Left cardiac atrium (tissue), 4 donors: ENCODE measurements at regions of chr6 and their contacts with region 1.

Region 1: DNA sequence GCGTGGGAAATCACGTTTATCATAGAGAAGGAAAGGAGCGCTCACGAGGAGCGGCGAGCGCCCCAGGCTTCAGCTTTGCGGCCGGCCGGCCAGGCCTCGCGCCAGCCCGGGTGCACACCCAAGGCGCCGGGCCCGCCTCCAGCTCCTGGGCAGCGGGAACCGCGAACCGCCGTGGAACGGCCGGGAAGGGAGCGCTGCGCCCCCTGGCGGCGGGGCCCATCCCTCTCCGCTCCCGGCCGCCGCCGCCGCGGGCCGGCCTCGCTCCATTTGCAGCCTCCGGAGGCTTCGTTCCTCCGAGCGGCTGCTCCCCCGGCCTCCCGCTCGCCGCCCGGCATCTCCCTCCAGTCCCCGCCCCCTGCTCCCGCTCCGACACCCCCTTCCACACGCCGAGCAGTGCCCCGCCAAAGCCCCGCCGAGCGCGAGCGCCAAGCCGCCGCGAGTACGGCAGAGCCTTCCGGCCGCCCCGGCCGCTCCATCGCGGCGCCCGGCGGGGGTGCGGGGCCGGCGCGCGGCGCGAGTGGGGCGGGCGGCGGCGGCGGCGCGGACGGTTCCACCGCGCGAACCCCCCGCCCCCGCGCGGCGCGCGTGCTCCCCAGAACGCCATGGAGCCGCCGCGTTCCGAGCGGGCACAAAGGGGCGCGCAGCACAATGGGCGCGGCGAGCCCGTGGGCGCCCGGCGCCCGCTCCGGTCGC is 956 bp downstream of the BEND3 start:
- DNase-seq: peak; percentile 90
- ATAC-seq: peak; percentile 96

Region 2: GRCh38 chr6:106461084-106461483 is 653.3 kb before region 1 on chr6:
- intact Hi-C with region 1: no loop called
- DNase-seq: no peak
- ATAC-seq: no peak

Region 3: DNA sequence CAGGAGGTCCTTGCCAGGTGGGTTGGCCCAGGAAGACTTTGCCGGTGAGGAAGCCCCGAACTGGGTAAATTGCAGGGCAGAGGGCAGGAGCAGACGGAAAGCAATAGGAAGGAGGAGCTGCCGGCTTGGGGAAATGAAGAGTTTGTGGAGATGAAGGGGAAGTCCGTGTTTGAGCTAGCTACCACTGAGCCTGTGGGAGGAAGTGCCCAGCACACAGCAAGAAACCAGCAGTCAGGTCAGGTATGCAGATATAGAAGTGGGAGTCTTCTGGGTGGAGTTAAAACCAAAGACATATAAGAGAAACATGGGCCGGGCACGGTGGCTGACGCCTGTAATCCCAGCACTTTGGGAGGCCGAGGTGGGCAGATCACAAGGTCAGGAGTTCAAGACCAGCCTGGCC is 174.5 kb before region 1 on chr6:
- intact Hi-C with region 1: no loop called
- DNase-seq: no peak
- ATAC-seq: no peak

Region 4: GRCh38 chr6:107026965-107027364 is 87.4 kb before region 1 on chr6:
- intact Hi-C with region 1: loop called (anchors 5 kb)
- DNase-seq: no peak
- ATAC-seq: no peak

Region 5: GRCh38 chr6:107506145-107506544 is 391.8 kb after region 1 on chr6:
- intact Hi-C with region 1: no loop called
- DNase-seq: no peak
- ATAC-seq: no peak